Naive thymus-derived CD4-positive, alpha-beta T cell (primary cell): ENCODE measurements at regions of chr4 and their contacts with region 1.

Region 1: GRCh38 chr4:1712216-1713002 is at the start of gene SLBP:
- DNase-seq: peak; percentile 98 to 99 (median 98)
- ATAC-seq: peak; percentile 92
- H3K4me3 ChIP-seq: peak within 1 kb of the TSS; percentile 100
- H3K4me3 Mint-ChIP-seq: peak within 1 kb of the TSS; percentile 89 to 98 (median 94)
- H3K27ac ChIP-seq: peak within 1 kb of the TSS; percentile 99
- H3K27ac Mint-ChIP-seq: peak within 1 kb of the TSS; percentile 90 to 98 (median 94)
- H3K4me1 ChIP-seq: peaks cover 32 to 34% of the 10 kb centered on the region in 2 donors
- H3K4me1 Mint-ChIP-seq: peaks cover 11 to 67% (median 59%) of the 10 kb centered on the region in 7 donors
- H3K27me3 ChIP-seq: no peaks in the 10 kb centered on the region
- H3K27me3 Mint-ChIP-seq: no peaks in the 10 kb centered on the region
- total RNA-seq, gene SLBP: 29.5 to 103 (median 30.3) TPM

Region 2: DNA sequence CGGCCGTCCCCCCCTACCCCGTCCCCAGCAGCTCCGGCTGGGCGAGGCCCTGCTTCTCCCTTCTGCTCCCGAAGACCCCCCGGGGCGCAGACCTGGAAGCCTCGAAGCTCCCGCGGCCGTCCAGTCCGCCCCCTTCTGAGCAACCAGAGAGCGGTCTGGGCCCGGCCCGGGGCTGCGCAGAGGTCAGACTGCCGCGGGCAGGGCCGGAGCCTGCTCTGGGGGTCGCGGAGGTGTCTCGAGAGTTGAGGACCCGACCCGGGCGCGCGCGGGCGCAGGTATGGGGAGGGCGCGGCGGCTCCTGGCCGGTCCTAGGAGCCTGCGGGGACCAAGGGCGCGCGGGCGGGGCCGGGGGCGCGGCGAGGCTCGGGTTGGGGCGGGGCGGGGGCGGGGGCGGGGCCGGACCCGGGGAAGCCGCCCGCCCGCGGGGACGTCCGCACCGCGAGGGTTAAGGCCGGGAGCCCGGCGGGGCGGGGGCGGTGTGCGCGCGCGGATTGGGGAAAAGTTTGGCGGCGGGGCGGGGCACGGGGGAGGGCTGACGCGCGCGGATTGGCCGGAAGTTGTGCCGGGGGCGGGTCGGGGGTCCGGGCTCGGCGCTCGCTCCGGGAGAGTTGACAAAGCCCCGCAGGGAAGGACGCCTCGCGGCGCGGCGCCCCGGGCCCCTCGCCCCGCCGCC is 701.3 kb before region 1 on chr4 and contains the start of gene FGFRL1:
- CTCF ChIA-PET with region 1: no interaction called
- POLR2A ChIA-PET with region 1: no interaction called
- intact Hi-C with region 1: loop called in 1 of 2 experiments (anchors 5 kb)
- DNase-seq: peak; percentile 78 to 95 (median 87)
- ATAC-seq: peak; percentile 78
- H3K4me3 ChIP-seq: peak within 1 kb of the TSS; percentile 77
- H3K4me3 Mint-ChIP-seq: peak within 1 kb of the TSS; percentile 86 to 97 (median 89)
- H3K27ac ChIP-seq: peak within 1 kb of the TSS; percentile 83
- H3K27ac Mint-ChIP-seq: peak within 1 kb of the TSS; percentile 76 to 96 (median 92)
- H3K4me1 ChIP-seq: peaks cover 0 to 10% of the 10 kb centered on the region in 2 donors
- H3K4me1 Mint-ChIP-seq: peaks cover 15 to 21% (median 18%) of the 10 kb centered on the region in 7 donors
- H3K27me3 ChIP-seq: no peaks in the 10 kb centered on the region
- H3K27me3 Mint-ChIP-seq: peaks cover 24 to 31% (median 27%) of the 10 kb centered on the region in 5 donors
- total RNA-seq, gene FGFRL1: 10.6 to 28.1 (median 22.0) TPM

Region 3: DNA sequence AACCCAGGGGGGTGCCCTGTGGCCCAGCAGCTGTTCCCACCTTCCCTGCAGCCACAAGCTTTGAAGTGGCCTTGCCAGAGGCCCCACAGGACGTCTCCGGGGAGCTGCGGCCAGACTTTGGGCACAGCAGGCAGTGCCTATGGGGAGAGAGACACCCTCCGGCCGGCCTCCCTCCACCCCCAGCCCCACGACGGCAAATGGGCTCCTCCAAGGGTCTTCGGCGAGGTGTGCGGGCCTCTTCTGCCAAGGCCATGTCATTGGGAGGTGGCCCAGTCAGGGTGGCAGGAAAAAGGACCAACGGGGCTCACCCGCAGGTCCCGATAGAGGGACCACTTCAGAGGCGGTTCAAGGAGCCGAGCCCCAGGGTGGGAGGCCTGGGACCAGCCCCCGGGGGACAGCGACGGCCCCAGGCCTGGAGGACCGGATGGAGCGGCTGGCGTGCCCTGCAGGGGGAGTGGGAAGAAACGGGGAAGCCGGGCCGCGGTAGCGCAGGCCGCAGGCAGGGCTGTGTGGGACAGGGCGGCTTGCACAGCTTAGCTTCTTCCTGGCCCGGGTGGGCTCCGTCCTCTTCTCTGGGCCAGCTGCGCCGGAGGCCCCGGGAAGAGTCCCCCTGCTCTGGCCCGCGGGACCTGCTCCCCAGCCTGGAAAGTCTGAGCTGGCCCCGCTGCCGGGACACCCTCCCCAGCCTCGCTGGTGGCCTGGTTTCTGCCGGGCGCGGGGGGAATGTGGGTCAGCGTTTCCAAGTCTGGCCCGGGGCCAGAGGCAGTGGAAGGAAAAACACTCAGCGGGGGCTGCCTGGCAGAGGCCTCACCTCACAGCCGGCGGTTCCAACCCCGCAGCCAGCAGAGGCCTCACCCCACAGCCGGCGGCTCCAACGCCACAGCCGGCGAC is 518.2 kb before region 1 on chr4:
- CTCF ChIA-PET with region 1: no interaction called
- POLR2A ChIA-PET with region 1: no interaction called
- intact Hi-C with region 1: no loop called
- DNase-seq: no peak
- ATAC-seq: no peak
- H3K4me3 ChIP-seq: no peak overlapping the region
- H3K4me3 Mint-ChIP-seq: no peak overlapping the region
- H3K27ac ChIP-seq: no peak overlapping the region
- H3K27ac Mint-ChIP-seq: no peak overlapping the region
- H3K4me1 ChIP-seq: no peaks in the 10 kb centered on the region
- H3K4me1 Mint-ChIP-seq: peaks cover 0 to 11% (median 6%) of the 10 kb centered on the region in 7 donors
- H3K27me3 ChIP-seq: no peaks in the 10 kb centered on the region
- H3K27me3 Mint-ChIP-seq: no peaks in the 10 kb centered on the region

Region 4: GRCh38 chr4:1683736-1684505 is 28.5 kb before region 1 on chr4 and contains the start of gene FAM53A:
- CTCF ChIA-PET with region 1: no interaction called
- POLR2A ChIA-PET with region 1: interaction called, 6 read pairs
- intact Hi-C with region 1: loop called (anchors 1 kb)
- DNase-seq: peak in 5 of 9 donors; percentile 23 to 99 (median 88)
- ATAC-seq: peak; percentile 98
- H3K4me3 ChIP-seq: peak within 1 kb of the TSS; percentile 51
- H3K4me3 Mint-ChIP-seq: peak within 1 kb of the TSS; percentile 86 to 97 (median 93)
- H3K27ac ChIP-seq: peak within 1 kb of the TSS; percentile 62
- H3K27ac Mint-ChIP-seq: peak within 1 kb of the TSS; percentile 86 to 98 (median 91)
- H3K4me1 ChIP-seq: peaks cover 0 to 4% of the 10 kb centered on the region in 2 donors
- H3K4me1 Mint-ChIP-seq: peaks cover 9 to 15% (median 12%) of the 10 kb centered on the region in 7 donors
- H3K27me3 ChIP-seq: no peaks in the 10 kb centered on the region
- H3K27me3 Mint-ChIP-seq: peaks cover 0 to 9% (median 0%) of the 10 kb centered on the region in 5 donors
- total RNA-seq, gene FAM53A: 1.2 to 3.6 (median 1.4) TPM

Region 5: GRCh38 chr4:1693129-1693896 is 19.1 kb before region 1 on chr4:
- CTCF ChIA-PET with region 1: interaction called, 21 read pairs
- POLR2A ChIA-PET with region 1: interaction called, 37 read pairs
- intact Hi-C with region 1: loop called (anchors 1 kb)
- DNase-seq: peak; percentile 65 to 83 (median 80)
- ATAC-seq: peak; percentile 97
- H3K4me3 ChIP-seq: no peak overlapping the region
- H3K4me3 Mint-ChIP-seq: no peak overlapping the region
- H3K27ac ChIP-seq: no peak overlapping the region
- H3K27ac Mint-ChIP-seq: peak overlapping the region in 8 of 9 donors; percentile 51 to 88 (median 72)
- H3K4me1 ChIP-seq: no peaks in the 10 kb centered on the region
- H3K4me1 Mint-ChIP-seq: peaks cover 0 to 5% (median 4%) of the 10 kb centered on the region in 7 donors
- H3K27me3 ChIP-seq: no peaks in the 10 kb centered on the region
- H3K27me3 Mint-ChIP-seq: no peaks in the 10 kb centered on the region

Region 6: GRCh38 chr4:1726146-1726934 is 13.9 kb after region 1 on chr4:
- CTCF ChIA-PET with region 1: interaction called, 16 read pairs
- POLR2A ChIA-PET with region 1: interaction called, 119 read pairs
- intact Hi-C with region 1: loop called (anchors 1 kb)
- DNase-seq: peak; percentile 77 to 89 (median 84)
- ATAC-seq: peak; percentile 69
- H3K4me3 ChIP-seq: peak overlapping the region; percentile 31
- H3K4me3 Mint-ChIP-seq: peak overlapping the region; percentile 32 to 97 (median 71)
- H3K27ac ChIP-seq: peak overlapping the region; percentile 88
- H3K27ac Mint-ChIP-seq: peak overlapping the region; percentile 18 to 99 (median 76)
- H3K4me1 ChIP-seq: peaks cover 37 to 54% of the 10 kb centered on the region in 2 donors
- H3K4me1 Mint-ChIP-seq: peaks cover 52 to 83% (median 59%) of the 10 kb centered on the region in 7 donors
- H3K27me3 ChIP-seq: no peaks in the 10 kb centered on the region
- H3K27me3 Mint-ChIP-seq: no peaks in the 10 kb centered on the region

Region 7: DNA sequence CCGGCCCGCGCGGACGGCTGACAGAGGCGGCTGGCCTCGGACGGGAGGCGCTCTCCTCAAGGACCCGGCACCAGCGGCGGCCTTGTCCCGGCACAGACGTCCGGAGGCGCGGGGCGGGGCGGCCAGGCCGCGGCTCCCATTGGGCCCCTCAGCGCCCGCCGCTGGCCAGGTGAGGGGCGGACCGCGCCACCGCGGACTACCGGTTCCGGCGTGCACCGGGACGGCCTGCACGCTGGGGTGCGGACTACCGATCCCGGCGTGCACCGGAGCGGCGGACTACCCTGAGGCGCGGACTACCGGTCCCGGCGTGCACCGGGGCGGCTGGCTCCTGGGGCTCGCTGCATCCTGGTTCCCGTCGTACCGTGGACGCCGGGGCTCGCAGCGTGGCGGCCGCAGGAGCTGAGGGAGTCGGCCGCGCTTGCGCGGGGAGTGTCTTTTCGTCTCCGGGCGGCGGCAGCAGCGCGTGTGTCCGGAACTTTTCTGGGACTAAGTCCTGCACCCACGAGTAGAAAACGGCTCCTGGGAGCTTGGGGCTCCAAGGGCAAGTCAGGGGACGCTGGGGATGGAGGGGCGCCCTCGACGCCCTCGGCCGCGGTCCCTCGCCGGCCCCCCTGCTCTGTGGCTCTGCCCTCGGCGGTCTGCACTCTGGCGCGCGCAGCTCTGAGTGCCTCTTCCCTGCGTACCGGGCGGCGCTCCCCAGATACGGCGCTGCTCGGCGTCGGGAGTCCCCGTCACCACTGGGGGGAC is 143.8 kb after region 1 on chr4 and contains the start of gene LETM1:
- CTCF ChIA-PET with region 1: no interaction called
- POLR2A ChIA-PET with region 1: interaction called, 3 read pairs
- intact Hi-C with region 1: loop called (anchors 1 kb)
- DNase-seq: peak; percentile 79 to 96 (median 88)
- ATAC-seq: peak; percentile 98
- H3K4me3 ChIP-seq: peak within 1 kb of the TSS; percentile 86
- H3K4me3 Mint-ChIP-seq: peak within 1 kb of the TSS; percentile 67 to 88 (median 83)
- H3K27ac ChIP-seq: peak within 1 kb of the TSS; percentile 70
- H3K27ac Mint-ChIP-seq: peak within 1 kb of the TSS in 8 of 9 donors; percentile 17 to 80 (median 48)
- H3K4me1 ChIP-seq: peaks cover 10 to 14% of the 10 kb centered on the region in 2 donors
- H3K4me1 Mint-ChIP-seq: peaks cover 31 to 45% (median 41%) of the 10 kb centered on the region in 7 donors
- H3K27me3 ChIP-seq: no peaks in the 10 kb centered on the region
- H3K27me3 Mint-ChIP-seq: no peaks in the 10 kb centered on the region
- total RNA-seq, gene LETM1: 29.5 to 56.4 (median 36.0) TPM

Region 8: GRCh38 chr4:2008875-2009703 is 296.7 kb after region 1 on chr4 and contains the start of gene NELFA:
- CTCF ChIA-PET with region 1: no interaction called
- POLR2A ChIA-PET with region 1: no interaction called
- intact Hi-C with region 1: loop called (anchors 1 to 5 kb)
- DNase-seq: peak; percentile 92 to 98 (median 96)
- ATAC-seq: peak; percentile 93
- H3K4me3 ChIP-seq: peak within 1 kb of the TSS; percentile 96
- H3K4me3 Mint-ChIP-seq: peak within 1 kb of the TSS; percentile 81 to 96 (median 94)
- H3K27ac ChIP-seq: peak within 1 kb of the TSS; percentile 99
- H3K27ac Mint-ChIP-seq: peak within 1 kb of the TSS; percentile 91 to 99 (median 96)
- H3K4me1 ChIP-seq: peaks cover 13 to 24% of the 10 kb centered on the region in 2 donors
- H3K4me1 Mint-ChIP-seq: peaks cover 30 to 38% (median 34%) of the 10 kb centered on the region in 7 donors
- H3K27me3 ChIP-seq: no peaks in the 10 kb centered on the region
- H3K27me3 Mint-ChIP-seq: peaks cover 0 to 20% (median 0%) of the 10 kb centered on the region in 5 donors
- total RNA-seq, gene NELFA: 32.7 to 50.1 (median 43.6) TPM

Region 9: GRCh38 chr4:2910409-2910808 is 1198.0 kb after region 1 on chr4:
- CTCF ChIA-PET with region 1: no interaction called
- POLR2A ChIA-PET with region 1: no interaction called
- intact Hi-C with region 1: no loop called
- DNase-seq: no peak
- ATAC-seq: no peak
- H3K4me3 ChIP-seq: no peak overlapping the region
- H3K4me3 Mint-ChIP-seq: no peak overlapping the region
- H3K27ac ChIP-seq: no peak overlapping the region
- H3K27ac Mint-ChIP-seq: peak overlapping the region in 2 of 9 donors; percentile 15 to 34
- H3K4me1 ChIP-seq: peaks cover 15 to 20% of the 10 kb centered on the region in 2 donors
- H3K4me1 Mint-ChIP-seq: peaks cover 14 to 31% (median 23%) of the 10 kb centered on the region in 7 donors
- H3K27me3 ChIP-seq: no peaks in the 10 kb centered on the region
- H3K27me3 Mint-ChIP-seq: no peaks in the 10 kb centered on the region